Activated CD4-positive, alpha-beta T cell treated with anti-CD3 and anti-CD28 coated beads, Interleukin-2, amount 10 ng/mL, durations not matched to agents 24 days and 14 days (primary cell): ENCODE measurements at regions of chr6 and their contacts with region 1.

Region 1: GRCh38 chr6:2111162-2111677 is 134.2 kb downstream of the GMDS start:
- DNase-seq: no peak
- H3K4me3 Mint-ChIP-seq: peak overlapping the region; percentile 79
- H3K27ac Mint-ChIP-seq: peak overlapping the region; percentile 91
- H3K4me1 Mint-ChIP-seq: peaks cover 28% of the 10 kb centered on the region
- H3K27me3 Mint-ChIP-seq: peaks cover 3% of the 10 kb centered on the region

Region 2: DNA sequence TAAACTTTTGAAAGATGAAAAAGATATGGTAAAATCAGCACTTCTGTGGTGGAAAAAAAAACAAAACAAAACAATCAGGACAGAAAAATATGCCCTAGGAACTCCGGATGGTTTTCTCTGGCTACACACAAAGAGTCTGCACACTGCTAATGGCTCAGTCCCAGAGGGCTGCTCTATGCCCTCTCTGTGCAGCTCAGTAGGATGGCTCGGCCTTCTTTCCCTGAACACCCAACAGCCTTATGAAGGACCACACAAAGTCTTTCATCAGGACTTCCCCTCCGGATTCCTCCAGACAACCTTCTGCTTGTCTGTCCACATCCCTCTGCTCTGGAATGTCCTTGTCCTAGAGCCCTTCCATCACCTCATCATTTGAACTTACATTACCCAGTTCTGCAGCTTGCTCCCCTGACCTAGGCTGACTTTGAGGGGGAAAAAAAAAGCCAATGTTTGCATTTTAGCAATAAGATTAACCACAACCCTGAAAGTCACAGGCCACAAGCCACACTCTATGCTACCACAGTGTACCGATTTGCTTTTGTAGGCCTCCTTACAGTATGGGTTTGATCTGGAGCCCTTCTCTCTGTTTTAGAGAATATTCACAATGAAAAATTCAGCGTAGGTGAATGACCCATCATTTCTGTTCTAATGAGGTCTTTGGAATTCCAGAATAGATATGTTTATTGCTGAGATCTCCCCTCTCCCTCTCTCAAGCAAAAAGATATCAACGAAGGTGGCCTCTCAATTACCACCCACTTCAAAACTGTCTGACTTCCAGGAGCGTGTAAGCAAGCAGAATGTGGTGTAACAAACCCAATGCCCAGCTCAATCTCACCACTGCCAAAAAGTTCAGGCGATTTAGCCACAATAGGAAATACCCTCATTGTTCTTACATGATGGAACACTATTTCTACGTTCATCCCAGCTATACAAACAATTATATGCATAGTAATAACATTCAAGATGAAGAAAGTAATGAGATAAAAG is 29.8 kb before region 1 on chr6:
- intact Hi-C with region 1: loop called (anchors 1 kb)
- DNase-seq: peak; percentile 79
- H3K4me3 Mint-ChIP-seq: peak overlapping the region; percentile 3
- H3K27ac Mint-ChIP-seq: peak overlapping the region; percentile 35
- H3K4me1 Mint-ChIP-seq: peaks cover 33% of the 10 kb centered on the region
- H3K27me3 Mint-ChIP-seq: peaks cover 14% of the 10 kb centered on the region

Region 3: DNA sequence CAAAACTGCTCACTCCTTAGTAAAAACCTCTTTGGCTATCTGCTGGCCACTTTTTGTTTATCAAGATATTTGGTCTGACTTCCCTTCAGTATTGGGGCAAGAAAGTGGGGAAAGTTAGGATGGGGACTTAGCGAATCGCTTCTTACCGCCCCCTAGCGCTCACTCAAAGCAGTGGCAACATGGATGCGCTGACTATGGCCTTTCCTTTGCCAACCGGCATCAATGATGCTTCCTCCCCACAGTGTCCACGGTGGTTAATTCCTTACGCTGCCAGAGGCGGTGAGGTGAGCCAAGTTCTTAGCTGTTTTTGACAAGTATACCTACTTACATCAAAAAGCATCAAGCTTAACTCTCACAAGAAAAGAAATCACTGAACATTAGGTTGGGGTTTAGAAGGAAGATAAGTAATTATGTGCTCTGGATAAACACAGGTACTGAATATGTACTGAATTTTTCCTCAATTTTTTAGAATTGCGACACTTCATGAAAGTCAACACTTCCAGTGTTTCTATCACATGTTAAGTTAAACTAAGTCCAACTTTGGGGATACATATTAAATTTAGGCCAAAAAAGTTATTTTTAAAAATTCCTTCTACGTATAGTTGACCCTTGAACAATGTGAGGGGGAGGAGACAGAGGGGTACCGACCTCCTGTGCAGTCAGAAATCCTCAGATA is 47.5 kb after region 1 on chr6:
- intact Hi-C with region 1: loop called (anchors 2 kb)
- DNase-seq: no peak
- H3K4me3 Mint-ChIP-seq: no peak overlapping the region
- H3K27ac Mint-ChIP-seq: no peak overlapping the region
- H3K4me1 Mint-ChIP-seq: peaks cover 37% of the 10 kb centered on the region
- H3K27me3 Mint-ChIP-seq: peaks cover 17% of the 10 kb centered on the region

Region 4: DNA sequence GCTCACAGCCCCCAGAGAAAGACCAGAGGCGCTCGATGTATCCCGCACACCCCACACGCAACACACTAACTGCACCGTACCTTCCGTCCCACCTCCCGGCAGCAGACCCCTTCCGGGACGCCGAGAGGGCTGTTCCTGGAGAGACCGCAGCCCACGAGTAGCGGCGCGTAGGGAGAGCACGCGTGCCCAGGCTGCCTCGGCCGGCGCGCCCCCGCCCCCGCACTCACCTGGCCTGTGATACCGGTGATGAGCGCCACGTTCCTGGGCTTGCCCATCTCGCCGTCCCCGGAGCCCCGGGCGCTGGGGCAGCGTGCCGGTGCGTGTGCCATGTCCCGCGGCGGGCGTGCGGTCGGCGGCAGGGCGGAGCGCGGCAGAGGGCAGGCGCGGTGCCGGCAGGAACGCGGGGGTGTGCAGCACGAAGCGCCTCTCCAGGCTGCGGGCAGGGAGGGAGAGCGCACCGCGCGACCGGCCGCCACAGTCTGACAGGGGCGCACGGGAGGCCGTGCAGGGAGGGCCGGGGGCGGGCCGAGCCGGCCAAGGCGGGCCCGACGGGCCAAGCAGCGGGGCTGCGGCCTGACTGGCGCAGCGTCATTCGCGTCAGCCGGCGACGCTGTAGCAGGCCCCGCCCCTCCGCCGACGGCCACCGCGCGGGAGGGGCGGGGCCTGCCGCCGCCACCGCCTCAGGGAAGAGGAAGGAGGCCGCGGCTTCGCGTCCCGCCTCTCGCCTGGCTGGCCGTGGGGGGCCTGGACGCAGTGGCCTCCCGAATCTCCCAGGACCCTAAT is 134.1 kb after region 1 on chr6 and contains the start of gene GMDS:
- intact Hi-C with region 1: loop called (anchors 2 kb)
- DNase-seq: peak; percentile 96
- H3K4me3 Mint-ChIP-seq: peak within 1 kb of the TSS; percentile 93
- H3K27ac Mint-ChIP-seq: peak within 1 kb of the TSS; percentile 95
- H3K4me1 Mint-ChIP-seq: peaks cover 54% of the 10 kb centered on the region
- H3K27me3 Mint-ChIP-seq: no peaks in the 10 kb centered on the region
- total RNA-seq, gene GMDS: 38.2 and 47.4 TPM in 2 replicates

Region 5: DNA sequence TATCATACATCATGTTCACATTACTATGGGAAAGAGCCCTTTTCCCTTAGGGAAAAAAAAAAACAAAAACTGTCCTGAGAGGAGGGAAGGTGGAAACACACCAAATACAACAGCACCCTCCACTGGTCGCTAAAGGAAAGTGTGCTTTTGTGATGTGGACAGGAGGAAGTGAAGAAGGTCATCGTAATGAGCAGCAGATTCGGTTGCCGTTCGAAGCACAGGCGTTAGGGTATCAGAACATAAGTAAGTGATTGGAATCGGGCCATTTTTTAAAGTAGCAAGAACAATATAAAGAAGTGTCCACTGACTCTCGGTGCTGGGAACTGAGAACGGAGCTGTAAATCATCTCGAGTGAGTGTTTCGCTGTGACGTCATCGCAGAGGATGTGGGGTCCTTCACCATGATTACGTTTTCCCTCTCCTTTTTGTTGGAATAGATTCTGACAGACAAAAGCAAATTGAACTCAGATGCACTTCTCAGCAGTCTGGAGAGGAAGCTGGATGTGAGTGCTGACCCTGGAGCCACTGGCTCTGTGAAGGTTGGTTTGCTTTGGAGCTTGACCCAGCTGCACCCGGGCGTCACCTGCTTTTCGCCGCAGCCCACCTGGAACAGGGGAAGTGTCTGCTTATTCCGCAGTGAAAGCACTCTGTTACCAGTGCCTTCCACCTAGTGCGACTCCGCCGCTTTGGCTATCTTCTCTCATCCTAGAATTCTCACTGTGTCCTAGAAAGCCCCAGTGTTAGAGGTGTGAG is 337.8 kb after region 1 on chr6:
- intact Hi-C with region 1: loop called (anchors 10 kb)
- DNase-seq: peak; percentile 70
- H3K4me3 Mint-ChIP-seq: peak overlapping the region; percentile 31
- H3K27ac Mint-ChIP-seq: no peak overlapping the region
- H3K4me1 Mint-ChIP-seq: peaks cover 3% of the 10 kb centered on the region
- H3K27me3 Mint-ChIP-seq: peaks cover 18% of the 10 kb centered on the region

Region 6: DNA sequence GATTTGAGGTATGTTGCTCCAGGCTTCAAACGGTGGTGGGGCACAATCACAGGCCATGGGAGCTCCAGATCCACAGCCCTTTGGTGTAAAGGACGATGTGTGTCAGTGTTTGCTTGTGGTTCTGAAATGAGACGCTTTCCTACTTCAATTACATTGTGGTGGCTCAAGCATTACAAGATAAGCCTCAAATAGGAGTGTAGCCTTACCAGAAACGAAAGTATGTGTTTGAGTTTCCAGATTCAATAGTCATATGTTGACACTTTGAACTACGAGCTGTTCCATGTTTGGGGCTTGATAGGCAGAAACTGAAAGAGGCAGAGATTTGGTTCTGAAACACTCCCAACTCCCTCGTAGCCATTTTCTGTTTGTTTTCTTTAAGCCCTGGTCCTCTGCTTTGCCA is 452.4 kb after region 1 on chr6:
- intact Hi-C with region 1: loop called (anchors 5 kb)
- DNase-seq: peak; percentile 73
- H3K4me3 Mint-ChIP-seq: peak overlapping the region; percentile 44
- H3K27ac Mint-ChIP-seq: no peak overlapping the region
- H3K4me1 Mint-ChIP-seq: peaks cover 13% of the 10 kb centered on the region
- H3K27me3 Mint-ChIP-seq: peaks cover 78% of the 10 kb centered on the region